Mammary epithelial cell (primary cell): ENCODE measurements at regions of chr10 and their contacts with region 1.

Region 1: GRCh38 chr10:28532383-28533175 is at the start of gene WAC:
- DNase-seq: peak; percentile 92
- H3K4me3 ChIP-seq: peak within 1 kb of the TSS; percentile 96 to 99 (median 97)
- H3K27ac ChIP-seq: peak within 1 kb of the TSS; percentile 97
- H3K4me1 ChIP-seq: peaks cover 3% of the 10 kb centered on the region
- H3K27me3 ChIP-seq: no peaks in the 10 kb centered on the region
- CTCF ChIP-seq: peak in 1 of 2 donors; percentile 26
- total RNA-seq, gene WAC: 57.0 to 105 TPM

Region 2: DNA sequence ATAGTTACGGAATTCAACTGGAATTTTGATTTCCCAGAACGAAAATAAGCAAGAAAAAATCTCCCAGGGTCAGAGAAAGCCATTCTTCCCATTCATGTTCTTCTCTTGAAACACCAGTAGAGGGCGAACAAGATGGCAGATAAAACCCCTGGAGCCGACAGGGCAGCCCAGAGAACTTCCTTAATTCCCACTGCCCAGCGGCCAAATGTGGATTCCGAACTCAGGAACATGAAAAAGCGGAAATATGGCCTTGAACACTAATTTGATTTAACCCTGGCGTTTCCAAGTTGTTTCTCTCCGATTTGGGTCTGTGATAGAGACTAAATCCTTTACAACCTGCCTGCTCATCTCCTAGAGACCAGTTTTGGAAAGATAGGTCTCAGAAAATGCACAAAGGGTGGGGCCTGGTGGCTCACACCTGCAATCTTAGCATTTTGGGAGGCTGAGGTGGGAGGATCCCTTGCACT is 100.3 kb before region 1 on chr10:
- CTCF ChIA-PET with region 1: no interaction called
- dilution Hi-C with region 1: no loop called
- in situ Hi-C with region 1: no loop called
- intact Hi-C with region 1: loop called (anchors 2 kb)
- DNase-seq: peak; percentile 43
- H3K4me3 ChIP-seq: no peak overlapping the region
- H3K27ac ChIP-seq: no peak overlapping the region
- H3K4me1 ChIP-seq: no peaks in the 10 kb centered on the region
- H3K27me3 ChIP-seq: no peaks in the 10 kb centered on the region
- CTCF ChIP-seq: peak; percentile 69 to 82

Region 3: GRCh38 chr10:28444031-28444430 is 88.5 kb before region 1 on chr10:
- CTCF ChIA-PET with region 1: no interaction called
- dilution Hi-C with region 1: loop called (anchors 5 kb)
- in situ Hi-C with region 1: no loop called
- intact Hi-C with region 1: no loop called
- DNase-seq: no peak
- H3K4me3 ChIP-seq: no peak overlapping the region
- H3K27ac ChIP-seq: no peak overlapping the region
- H3K4me1 ChIP-seq: no peaks in the 10 kb centered on the region
- H3K27me3 ChIP-seq: no peaks in the 10 kb centered on the region
- CTCF ChIP-seq: no peak

Region 4: DNA sequence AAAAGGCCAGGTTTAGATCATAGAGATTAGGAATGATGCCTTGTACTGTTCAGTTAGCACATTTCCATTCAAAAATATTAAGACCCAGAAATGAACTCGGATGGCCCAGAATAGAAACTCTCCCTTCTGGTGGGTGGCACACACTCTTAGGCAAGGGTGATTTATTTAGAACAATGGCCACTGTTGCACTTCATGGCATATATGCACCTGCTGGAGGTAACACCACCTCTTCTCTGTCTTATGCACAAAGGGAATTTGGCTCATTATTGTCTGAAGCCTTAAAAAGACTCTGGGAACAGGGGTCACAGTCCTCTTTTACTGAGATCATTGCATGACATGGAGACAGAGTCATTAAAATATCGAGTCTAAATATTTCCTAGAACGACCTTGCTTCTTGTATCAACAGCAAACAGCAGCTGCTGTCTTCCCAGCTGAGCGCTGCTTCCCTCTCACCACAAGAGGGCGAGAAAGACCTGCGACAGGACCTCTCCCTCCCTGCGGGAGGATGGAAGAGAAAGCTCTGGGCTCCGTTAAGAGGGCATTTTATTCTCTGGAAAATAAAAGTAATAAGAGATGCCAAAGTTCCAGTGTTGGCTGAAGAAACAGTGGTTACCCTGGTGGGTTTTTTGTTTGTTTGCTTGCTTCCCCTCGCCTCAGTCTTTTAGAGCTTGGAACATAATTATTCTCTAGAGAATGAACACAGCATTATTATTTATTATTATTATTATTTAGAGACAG is 131.2 kb after region 1 on chr10:
- CTCF ChIA-PET with region 1: no interaction called
- dilution Hi-C with region 1: no loop called
- in situ Hi-C with region 1: no loop called
- intact Hi-C with region 1: no loop called
- DNase-seq: peak; percentile 59
- H3K4me3 ChIP-seq: no peak overlapping the region
- H3K27ac ChIP-seq: no peak overlapping the region
- H3K4me1 ChIP-seq: peaks cover 11% of the 10 kb centered on the region
- H3K27me3 ChIP-seq: peaks cover 2% of the 10 kb centered on the region
- CTCF ChIP-seq: peak; percentile 98 to 99